Cardiac septum (tissue), 1 donor: ENCODE measurements at regions of chr15 and their contacts with region 1.

Region 1: GRCh38 chr15:48602358-48603122 is 43.0 kb downstream of the FBN1 start:
- DNase-seq: no peak

Region 2: GRCh38 chr15:48481802-48482201 is 120.7 kb before region 1 on chr15:
- intact Hi-C with region 1: no loop called
- DNase-seq: no peak

Region 3: DNA sequence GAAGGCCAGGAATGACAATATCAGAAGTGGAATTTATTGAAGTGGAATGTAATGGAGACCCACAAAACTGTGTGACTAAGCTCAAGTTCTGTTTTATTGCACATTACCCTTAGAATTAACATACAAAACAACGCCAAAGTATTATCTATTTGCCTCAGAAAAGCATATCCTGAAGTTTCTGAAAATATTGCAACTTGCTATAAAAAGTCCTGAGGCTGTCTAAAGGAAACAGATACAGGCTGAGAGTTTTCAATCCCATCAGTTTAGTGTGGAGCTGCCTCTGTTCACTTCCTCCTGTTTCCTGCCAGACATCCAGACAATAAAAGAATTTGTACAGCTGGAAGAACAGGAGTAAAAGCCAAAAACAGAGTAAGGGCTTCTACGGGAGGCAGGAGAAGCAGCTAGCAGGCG is 65.9 kb before region 1 on chr15:
- intact Hi-C with region 1: loop called (anchors 5 kb)
- DNase-seq: no peak